Activated CD8-positive, alpha-beta T cell treated with anti-CD3 and anti-CD28 coated beads, Interleukin-2, amount 10 ng/mL, durations not matched to agents 7 days and 5 days (primary cell): ENCODE measurements at regions of chr3 and their contacts with region 1.

Region 1: GRCh38 chr3:57112206-57112605 is 51.7 kb downstream of the SPATA12 start:
- DNase-seq: no peak
- ATAC-seq: no peak
- H3K4me3 Mint-ChIP-seq: no peak overlapping the region
- H3K27ac Mint-ChIP-seq: no peak overlapping the region
- H3K4me1 Mint-ChIP-seq: peaks cover 5% of the 10 kb centered on the region
- H3K27me3 Mint-ChIP-seq: peaks cover 16% of the 10 kb centered on the region

Region 2: GRCh38 chr3:57100046-57100695 is 12.0 kb before region 1 on chr3:
- CTCF ChIA-PET with region 1: interaction called, 15 read pairs
- POLR2A ChIA-PET with region 1: no interaction called
- DNase-seq: peak; percentile 76
- ATAC-seq: peak; percentile 85
- H3K4me3 Mint-ChIP-seq: no peak overlapping the region
- H3K27ac Mint-ChIP-seq: no peak overlapping the region
- H3K4me1 Mint-ChIP-seq: no peaks in the 10 kb centered on the region
- H3K27me3 Mint-ChIP-seq: peaks cover 10% of the 10 kb centered on the region